ENCODE measurements at regions of chr2 and their contacts with region 1.

Region 1: GRCh38 chr2:239288951-239289511 is 111.8 kb downstream of the HDAC4 start:
- DNase-seq: peak; percentile 70
- H3K4me3 Mint-ChIP-seq: peak overlapping the region; percentile 44
- H3K27ac Mint-ChIP-seq: peak overlapping the region; percentile 82
- H3K4me1 Mint-ChIP-seq: peaks cover 80% of the 10 kb centered on the region
- H3K27me3 Mint-ChIP-seq: peaks cover 9% of the 10 kb centered on the region

Region 2: DNA sequence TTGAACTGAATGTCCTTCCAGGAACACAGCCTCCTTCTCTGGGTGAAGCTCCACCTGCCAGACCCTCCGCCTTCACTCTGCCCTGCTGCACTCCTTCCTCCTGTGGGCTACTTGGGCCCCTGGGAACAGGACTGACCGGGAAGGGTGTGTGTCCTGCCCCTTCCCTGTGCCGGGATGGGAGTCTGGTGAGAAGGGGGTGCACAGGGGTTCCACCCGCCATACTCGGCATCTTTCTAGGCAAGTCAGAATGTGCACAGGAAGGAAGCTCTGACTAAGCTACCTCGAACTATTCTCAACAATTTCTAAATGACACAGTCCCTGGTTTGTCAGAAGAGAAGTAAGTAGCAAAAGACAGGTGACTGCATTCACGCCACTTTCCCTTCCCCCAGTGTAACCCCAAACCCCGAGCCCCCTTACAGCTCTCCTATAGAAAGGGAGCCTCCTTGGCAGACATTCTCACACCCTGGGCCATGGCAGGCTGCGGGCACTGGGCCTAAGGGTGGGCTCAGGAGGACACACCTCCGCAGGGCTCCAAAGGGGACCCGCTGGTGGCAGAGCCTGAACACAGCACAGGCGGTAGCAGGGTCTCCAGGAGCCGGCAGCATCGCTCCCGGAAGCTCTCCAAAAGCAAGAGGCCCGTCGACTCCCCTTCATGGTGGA is 72.3 kb before region 1 on chr2:
- CTCF ChIA-PET with region 1: no interaction called
- POLR2A ChIA-PET with region 1: interaction called, 4 read pairs
- intact Hi-C with region 1: loop called (anchors 2 kb)
- DNase-seq: peak; percentile 69
- H3K4me3 Mint-ChIP-seq: peak overlapping the region; percentile 74
- H3K27ac Mint-ChIP-seq: peak overlapping the region; percentile 88
- H3K4me1 Mint-ChIP-seq: peaks cover 64% of the 10 kb centered on the region
- H3K27me3 Mint-ChIP-seq: no peaks in the 10 kb centered on the region

Region 3: GRCh38 chr2:239275044-239275685 is 13.9 kb before region 1 on chr2:
- CTCF ChIA-PET with region 1: interaction called, 9 read pairs
- POLR2A ChIA-PET with region 1: interaction called, 4 read pairs
- intact Hi-C with region 1: loop called (anchors 1 kb)
- DNase-seq: peak; percentile 92
- H3K4me3 Mint-ChIP-seq: peak overlapping the region; percentile 61
- H3K27ac Mint-ChIP-seq: peak overlapping the region; percentile 75
- H3K4me1 Mint-ChIP-seq: peaks cover 48% of the 10 kb centered on the region
- H3K27me3 Mint-ChIP-seq: peaks cover 29% of the 10 kb centered on the region

Region 4: DNA sequence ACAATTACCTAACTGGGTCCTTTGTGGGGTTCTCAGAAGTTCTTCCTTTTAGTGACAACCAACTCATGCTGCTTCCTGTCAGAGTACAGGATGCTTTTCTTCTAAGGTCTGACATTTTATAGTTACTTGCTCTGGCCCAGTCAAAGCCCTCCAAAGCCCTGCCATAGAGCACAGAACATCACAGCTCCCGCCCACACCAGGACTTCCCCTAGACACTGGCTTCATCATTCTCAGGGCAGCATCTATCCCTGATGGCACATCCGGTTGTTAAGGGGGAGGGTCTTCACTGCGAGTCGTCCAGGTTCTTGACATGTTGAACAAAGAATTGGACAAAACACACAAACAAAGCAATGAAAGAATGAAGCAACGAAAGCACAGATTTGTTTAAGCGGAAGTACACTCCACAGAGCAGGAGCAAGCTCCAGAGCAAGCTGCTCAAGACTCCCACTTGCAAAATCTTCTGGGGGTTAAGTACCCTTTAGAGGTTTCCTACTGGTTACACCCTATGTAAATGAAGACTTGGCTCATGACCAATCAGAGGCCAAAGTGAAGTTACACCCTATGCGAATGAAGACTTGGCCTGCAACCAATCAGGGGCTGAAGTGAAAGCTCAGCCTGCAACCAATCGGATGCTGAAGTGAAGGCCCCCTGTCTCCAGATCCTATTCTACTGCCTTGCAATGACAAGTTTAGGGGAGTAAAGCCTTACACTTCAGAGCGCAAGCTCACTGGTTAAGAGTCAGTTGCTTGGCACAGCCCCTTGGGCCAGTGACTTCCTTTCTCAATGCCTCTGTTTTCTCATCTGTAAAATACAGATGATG is 32.8 kb after region 1 on chr2:
- CTCF ChIA-PET with region 1: interaction called, 4 read pairs
- POLR2A ChIA-PET with region 1: interaction called, 3 read pairs
- intact Hi-C with region 1: loop called (anchors 1 kb)
- DNase-seq: peak; percentile 86
- H3K4me3 Mint-ChIP-seq: peak overlapping the region; percentile 50
- H3K27ac Mint-ChIP-seq: peak overlapping the region; percentile 89
- H3K4me1 Mint-ChIP-seq: peaks cover 76% of the 10 kb centered on the region
- H3K27me3 Mint-ChIP-seq: no peaks in the 10 kb centered on the region

Region 5: GRCh38 chr2:239369631-239370161 is 80.7 kb after region 1 on chr2:
- CTCF ChIA-PET with region 1: interaction called, 4 read pairs
- POLR2A ChIA-PET with region 1: no interaction called
- intact Hi-C with region 1: loop called (anchors 1 kb)
- DNase-seq: peak; percentile 93
- H3K4me3 Mint-ChIP-seq: peak overlapping the region; percentile 68
- H3K27ac Mint-ChIP-seq: peak overlapping the region; percentile 92
- H3K4me1 Mint-ChIP-seq: peaks cover 8% of the 10 kb centered on the region
- H3K27me3 Mint-ChIP-seq: no peaks in the 10 kb centered on the region

Measured in activated CD4-positive, alpha-beta memory T cell treated with anti-CD3 and anti-CD28 coated beads for 36 hours (primary cell).